ENCODE measurements at regions of chr1 and their contacts with region 1.

Region 1: DNA sequence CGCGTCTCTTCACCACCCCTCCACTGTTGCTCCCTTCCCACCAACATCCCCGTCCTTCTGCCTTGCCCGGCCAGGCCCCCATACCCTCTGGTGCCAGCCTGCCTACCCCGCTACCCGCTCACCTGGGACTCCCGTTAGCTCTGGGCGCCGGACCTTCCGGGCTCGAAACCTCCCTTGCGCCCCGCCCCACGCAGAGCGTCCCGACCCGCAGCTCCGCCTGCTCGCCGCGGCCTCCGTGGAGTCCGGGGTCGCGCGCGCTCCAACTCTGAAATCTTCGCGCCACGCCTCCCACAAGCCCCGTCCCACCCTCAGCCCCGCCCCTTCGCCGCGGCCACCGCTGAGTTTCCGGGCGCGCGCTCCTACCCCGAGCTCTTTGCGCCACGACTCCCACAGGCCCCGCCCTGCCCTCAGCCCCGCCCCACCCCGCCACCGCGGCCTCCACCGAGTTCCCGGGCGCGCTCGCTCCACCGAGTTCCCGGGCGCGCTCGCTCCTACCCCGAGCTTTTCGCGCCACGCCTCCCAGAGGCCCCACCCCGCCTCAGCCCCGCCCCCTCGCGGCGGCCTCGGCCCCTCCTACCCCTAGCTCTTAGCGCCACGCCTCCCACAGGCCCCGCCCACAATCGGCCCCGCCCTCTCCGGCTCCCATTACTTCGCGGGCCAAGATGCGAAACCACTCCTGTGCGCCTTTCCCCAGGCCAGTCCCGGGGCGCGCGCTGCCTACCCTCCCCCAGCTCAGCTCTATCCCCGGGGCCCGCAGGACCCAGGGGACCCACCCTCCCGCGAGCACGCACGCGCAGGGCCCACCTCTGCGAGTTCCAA is at the start of gene IFT25:
- DNase-seq: peak; percentile 95
- ATAC-seq: peak; percentile 74
- H3K4me3 ChIP-seq: peak within 1 kb of the TSS; percentile 96
- H3K27ac ChIP-seq: peak within 1 kb of the TSS; percentile 23; the same call in 1 of the 2 replicates
- H3K4me1 ChIP-seq: peaks cover 46% of the 10 kb centered on the region
- H3K27me3 ChIP-seq: no peaks in the 10 kb centered on the region
- CTCF ChIP-seq: no peak
- total RNA-seq, gene IFT25: 49.7 and 66.7 TPM in 2 replicates

Region 2: GRCh38 chr1:53878492-53879105 is 67.0 kb before region 1 on chr1:
- CTCF ChIA-PET with region 1: interaction called, 13 read pairs
- POLR2A ChIA-PET with region 1: interaction called, 19 read pairs
- intact Hi-C with region 1: loop called (anchors 2 kb)
- DNase-seq: peak; percentile 76
- ATAC-seq: peak; percentile 54
- H3K4me3 ChIP-seq: no peak overlapping the region
- H3K27ac ChIP-seq: no peak overlapping the region
- H3K4me1 ChIP-seq: no peaks in the 10 kb centered on the region
- H3K27me3 ChIP-seq: no peaks in the 10 kb centered on the region
- CTCF ChIP-seq: peak; percentile 89

Region 3: DNA sequence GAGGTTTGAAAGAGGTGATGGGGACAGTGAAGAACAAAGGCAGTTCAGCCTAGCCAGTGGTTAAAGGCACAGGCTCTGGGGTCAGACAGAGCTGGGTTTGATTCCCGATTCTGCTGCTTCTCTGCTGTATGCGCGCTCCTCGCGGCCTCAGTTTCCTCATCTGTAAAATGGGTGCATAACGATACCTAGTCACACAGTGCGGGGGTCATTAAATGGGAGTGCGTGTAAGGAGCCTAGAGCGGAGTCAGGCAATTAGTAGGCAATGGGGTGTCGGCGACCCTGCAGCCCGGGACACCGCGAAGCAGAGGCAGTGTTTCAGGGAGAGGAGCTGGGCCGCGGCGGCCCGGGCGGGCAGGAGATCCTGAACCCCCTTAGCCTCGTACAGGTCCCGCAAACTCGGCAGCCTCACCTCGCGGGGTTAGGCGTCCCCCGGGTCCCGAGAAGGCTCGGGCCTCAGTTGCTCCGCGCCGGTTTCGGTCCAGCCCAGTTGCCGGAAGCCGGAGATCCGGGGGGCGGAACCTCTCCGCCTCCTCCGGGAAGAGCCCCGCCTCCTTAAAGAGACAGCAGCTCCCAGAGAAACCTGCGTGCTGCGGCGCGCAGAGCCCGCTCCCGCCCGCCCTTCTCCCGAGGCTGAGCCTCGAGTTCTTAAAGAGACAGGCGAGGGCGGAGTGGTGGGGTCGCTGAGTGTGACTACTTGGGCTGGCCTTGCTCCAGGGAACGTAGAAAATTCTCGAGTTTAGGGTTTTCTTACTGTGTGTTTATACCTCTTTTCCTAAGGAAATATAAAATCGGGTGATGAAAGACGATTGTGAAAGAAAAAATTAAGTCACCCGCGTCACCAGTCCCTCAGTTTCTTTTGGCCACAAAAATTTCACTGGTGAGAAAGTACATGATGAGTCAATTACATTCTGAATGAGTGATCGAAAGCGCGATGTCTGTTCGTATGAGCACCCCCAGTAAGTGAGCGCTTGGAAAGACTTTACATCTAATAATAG is 56.0 kb before region 1 on chr1 and contains the start of gene YIPF1:
- CTCF ChIA-PET with region 1: no interaction called
- POLR2A ChIA-PET with region 1: interaction called, 7 read pairs
- intact Hi-C with region 1: loop called (anchors 2 kb)
- DNase-seq: peak; percentile 91
- ATAC-seq: peak; percentile 99
- H3K4me3 ChIP-seq: peak within 1 kb of the TSS; percentile 94
- H3K27ac ChIP-seq: peak within 1 kb of the TSS; percentile 30
- H3K4me1 ChIP-seq: peaks cover 15% of the 10 kb centered on the region
- H3K27me3 ChIP-seq: no peaks in the 10 kb centered on the region
- CTCF ChIP-seq: no peak
- total RNA-seq, gene YIPF1: 21.1 and 22.7 TPM in 2 replicates

Region 4: GRCh38 chr1:53982763-53983104 is 37.1 kb after region 1 on chr1:
- CTCF ChIA-PET with region 1: no interaction called
- POLR2A ChIA-PET with region 1: interaction called, 28 read pairs
- intact Hi-C with region 1: no loop called
- DNase-seq: no peak
- ATAC-seq: peak; percentile 13; the same call in 1 of the 2 replicates
- H3K4me3 ChIP-seq: peak overlapping the region; percentile 30
- H3K27ac ChIP-seq: no peak overlapping the region
- H3K4me1 ChIP-seq: no peaks in the 10 kb centered on the region
- H3K27me3 ChIP-seq: no peaks in the 10 kb centered on the region
- CTCF ChIP-seq: no peak